Heart right ventricle (tissue), 16 donors: ENCODE measurements at regions of chr10 and their contacts with region 1.

Region 1: GRCh38 chr10:95474228-95475002 is 86.8 kb downstream of the SORBS1 start:
- DNase-seq: peak in 1 of 2 donors; percentile 45
- ATAC-seq: peak; percentile 39 to 82 (median 68)
- H3K4me3 ChIP-seq: no peak overlapping the region
- H3K27ac ChIP-seq: peak overlapping the region; percentile 50 to 94 (median 90)
- H3K4me1 ChIP-seq: peaks cover 34 to 98% (median 78%) of the 10 kb centered on the region in 9 donors
- H3K27me3 ChIP-seq: no peaks in the 10 kb centered on the region
- CTCF ChIP-seq: peak in 2 of 9 donors; percentile 26 to 30

Region 2: GRCh38 chr10:95097805-95098204 is 376.6 kb before region 1 on chr10:
- intact Hi-C with region 1: no loop called
- DNase-seq: no peak
- ATAC-seq: no peak
- H3K4me3 ChIP-seq: no peak overlapping the region
- H3K27ac ChIP-seq: no peak overlapping the region
- H3K4me1 ChIP-seq: no peaks in the 10 kb centered on the region
- H3K27me3 ChIP-seq: no peaks in the 10 kb centered on the region
- CTCF ChIP-seq: no peak

Region 3: DNA sequence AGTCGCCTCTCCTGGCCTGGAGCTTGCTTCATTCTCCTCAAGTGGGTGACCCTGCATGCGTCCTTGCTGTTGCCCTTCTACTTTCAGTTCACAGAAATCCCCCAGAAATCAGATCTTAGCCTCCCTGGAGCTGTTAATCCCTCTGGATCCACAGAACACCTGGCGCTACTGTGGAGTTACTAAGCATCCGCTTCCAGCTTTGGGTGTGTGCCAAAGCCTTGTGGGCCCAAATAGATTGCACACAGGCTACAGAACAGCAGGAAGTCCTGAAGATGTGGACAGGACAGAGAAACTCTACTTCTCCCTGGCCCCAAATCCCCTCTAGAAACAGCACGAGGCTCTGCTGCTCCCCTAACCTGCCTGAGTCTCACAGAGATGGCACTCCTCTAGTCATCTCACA is 147.0 kb before region 1 on chr10:
- intact Hi-C with region 1: no loop called
- DNase-seq: peak; percentile 43 to 79
- ATAC-seq: peak; percentile 50 to 87 (median 76)
- H3K4me3 ChIP-seq: no peak overlapping the region
- H3K27ac ChIP-seq: peak overlapping the region in 9 of 10 donors; percentile 42 to 96 (median 61)
- H3K4me1 ChIP-seq: peaks cover 3 to 90% (median 56%) of the 10 kb centered on the region in 9 donors
- H3K27me3 ChIP-seq: no peaks in the 10 kb centered on the region
- CTCF ChIP-seq: peak in 1 of 9 donors; percentile 13

Region 4: DNA sequence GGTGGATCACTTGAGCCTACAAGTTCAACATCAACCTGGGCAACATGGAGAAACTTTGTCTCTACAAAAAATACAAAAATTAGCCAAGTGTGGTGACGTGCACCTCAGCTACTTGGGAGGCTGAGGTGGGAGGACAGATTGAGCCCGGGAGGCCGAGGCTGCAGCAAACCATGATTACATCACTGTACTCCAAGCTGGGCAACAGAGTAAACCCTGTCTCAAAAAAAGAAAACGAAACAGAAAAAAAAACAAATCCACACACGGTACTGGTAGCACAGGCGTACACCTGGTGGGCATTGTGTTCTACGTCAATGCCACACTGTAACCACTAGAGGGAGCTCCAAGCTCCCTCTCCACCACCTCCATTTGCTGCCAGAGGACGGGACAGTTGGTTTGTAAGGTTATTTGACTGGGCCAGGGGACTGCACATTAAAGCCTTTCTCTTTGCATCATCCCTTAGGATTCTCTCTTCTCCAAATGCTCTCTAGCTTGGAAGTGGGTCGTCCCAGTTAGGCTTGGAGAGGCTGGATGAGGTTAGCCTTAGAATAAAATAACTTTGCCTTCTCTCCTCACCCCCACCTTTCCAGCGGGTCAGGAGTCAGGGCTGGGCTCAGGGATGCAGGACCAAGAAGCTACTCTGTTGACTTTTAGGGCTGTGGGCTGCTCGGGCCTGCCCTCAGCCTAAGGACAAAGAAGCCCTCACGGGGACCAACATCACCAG is 44.0 kb before region 1 on chr10:
- intact Hi-C with region 1: loop called in 5 of 10 experiments (anchors 5 kb)
- DNase-seq: peak in 1 of 2 donors; percentile 59
- ATAC-seq: peak; percentile 71 to 80 (median 77)
- H3K4me3 ChIP-seq: no peak overlapping the region
- H3K27ac ChIP-seq: peak overlapping the region in 8 of 10 donors; percentile 50 to 95 (median 80)
- H3K4me1 ChIP-seq: peaks cover 46 to 100% (median 92%) of the 10 kb centered on the region in 9 donors
- H3K27me3 ChIP-seq: no peaks in the 10 kb centered on the region
- CTCF ChIP-seq: peak; percentile 94 to 98 (median 97)

Region 5: DNA sequence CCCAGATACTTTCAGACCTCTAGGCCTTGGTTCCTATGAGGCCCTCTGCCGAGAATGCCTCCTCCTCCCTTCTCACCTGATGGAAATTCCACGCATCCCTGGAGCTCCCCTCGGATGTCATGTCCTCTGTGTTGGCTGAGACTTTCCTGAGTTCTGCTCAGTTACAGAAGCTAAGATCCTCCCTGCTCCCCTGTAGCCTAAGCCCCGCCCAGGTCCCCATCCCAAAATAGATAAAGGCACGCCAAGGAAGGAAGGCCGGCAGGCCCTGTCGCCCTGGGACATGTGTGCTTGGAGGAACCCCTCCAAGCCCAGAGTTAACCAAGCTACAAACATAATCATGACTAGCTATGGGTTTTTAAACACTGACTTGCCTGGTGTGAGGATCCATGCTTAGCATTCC is 36.7 kb before region 1 on chr10:
- intact Hi-C with region 1: loop called in 5 of 10 experiments (anchors 5 kb)
- DNase-seq: peak; percentile 63 to 66
- ATAC-seq: peak; percentile 14 to 69 (median 51)
- H3K4me3 ChIP-seq: no peak overlapping the region
- H3K27ac ChIP-seq: peak overlapping the region in 8 of 10 donors; percentile 18 to 95 (median 68)
- H3K4me1 ChIP-seq: peaks cover 32 to 100% (median 78%) of the 10 kb centered on the region in 9 donors
- H3K27me3 ChIP-seq: no peaks in the 10 kb centered on the region
- CTCF ChIP-seq: no peak

Region 6: DNA sequence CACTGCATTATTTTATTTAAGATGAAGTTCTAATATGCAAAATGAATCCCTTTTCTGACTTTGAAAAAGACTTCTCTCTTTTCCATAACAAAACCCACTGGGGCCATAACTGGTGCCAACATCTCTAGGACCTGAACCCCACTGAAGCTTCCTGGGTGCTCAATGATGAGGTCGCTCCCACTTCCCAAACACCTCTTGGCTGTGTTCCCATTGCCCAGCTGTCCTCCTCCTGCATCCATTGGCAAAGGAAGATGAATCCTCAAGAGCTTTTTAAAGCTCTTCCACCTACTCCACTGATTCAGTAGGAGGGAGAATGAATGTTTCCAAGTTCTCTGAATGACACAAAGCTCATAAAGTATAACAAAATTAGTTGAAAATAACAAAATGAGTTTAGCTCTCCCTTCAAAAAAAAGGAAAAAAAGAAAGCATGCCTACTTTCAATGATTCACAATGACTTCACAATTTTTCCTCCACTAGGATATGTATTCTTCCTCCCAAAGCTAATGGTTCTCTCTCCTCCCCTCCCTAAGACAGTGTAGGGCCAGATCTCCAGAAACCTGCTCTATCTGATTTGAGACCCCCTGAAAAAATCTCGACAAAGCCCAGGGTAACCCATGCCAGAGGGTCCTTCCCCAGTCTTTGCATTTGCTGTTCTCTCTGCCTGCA is 22.0 kb after region 1 on chr10:
- intact Hi-C with region 1: no loop called
- DNase-seq: no peak
- ATAC-seq: no peak
- H3K4me3 ChIP-seq: no peak overlapping the region
- H3K27ac ChIP-seq: peak overlapping the region in 5 of 10 donors; percentile 9 to 58 (median 40)
- H3K4me1 ChIP-seq: peaks cover 14 to 88% (median 63%) of the 10 kb centered on the region in 9 donors
- H3K27me3 ChIP-seq: no peaks in the 10 kb centered on the region
- CTCF ChIP-seq: no peak

Region 7: DNA sequence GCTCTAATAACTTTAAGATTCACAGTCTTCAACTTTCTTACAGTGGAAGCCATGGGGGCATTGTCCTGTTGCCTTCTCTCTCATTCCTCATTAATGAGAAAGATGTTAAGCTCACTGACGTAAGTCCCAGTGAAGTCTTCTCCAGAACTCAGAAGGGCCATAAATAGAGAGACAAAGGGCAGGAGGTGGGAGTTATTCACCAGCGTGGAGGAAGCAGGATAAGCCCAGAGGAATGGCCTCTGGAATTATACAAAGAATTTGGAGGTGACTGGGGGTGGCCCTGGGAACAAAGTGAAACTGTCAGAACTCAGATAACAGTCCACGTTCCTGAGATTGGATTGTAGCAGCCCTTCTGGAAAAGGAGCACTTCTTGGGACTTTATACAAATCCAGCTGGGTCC is 34.3 kb after region 1 on chr10:
- intact Hi-C with region 1: loop called in 3 of 10 experiments (anchors 5 kb)
- DNase-seq: peak in 1 of 2 donors; percentile 51
- ATAC-seq: peak; percentile 65 to 86 (median 81)
- H3K4me3 ChIP-seq: peak overlapping the region in 6 of 10 donors; percentile 0 to 28 (median 14)
- H3K27ac ChIP-seq: peak overlapping the region; percentile 62 to 90 (median 82)
- H3K4me1 ChIP-seq: peaks cover 26 to 97% (median 82%) of the 10 kb centered on the region in 9 donors
- H3K27me3 ChIP-seq: no peaks in the 10 kb centered on the region
- CTCF ChIP-seq: no peak

Region 8: DNA sequence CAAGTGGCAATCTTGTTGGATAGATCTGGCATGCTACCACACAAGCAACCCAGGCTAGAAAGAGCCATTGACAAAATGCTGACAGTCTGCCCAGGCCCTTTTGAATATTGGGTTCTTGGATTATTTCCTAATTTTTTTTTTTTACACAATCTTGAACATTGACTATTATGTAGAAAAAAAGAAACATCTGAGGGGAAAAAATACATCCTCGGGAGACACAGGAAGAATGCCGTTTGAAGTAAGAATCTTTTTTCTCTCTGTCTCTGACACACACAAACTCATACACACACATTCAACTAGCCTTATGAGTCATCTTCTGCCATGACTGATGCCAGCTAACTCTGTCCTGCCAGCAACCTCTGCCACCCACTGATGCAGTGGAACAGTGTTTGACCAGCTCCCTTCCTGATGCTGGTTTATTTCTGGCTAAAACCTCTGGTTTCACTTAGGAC is 39.6 kb after region 1 on chr10:
- intact Hi-C with region 1: loop called in 3 of 10 experiments (anchors 5 kb)
- DNase-seq: peak; percentile 25 to 51
- ATAC-seq: peak; percentile 44 to 78 (median 70)
- H3K4me3 ChIP-seq: no peak overlapping the region
- H3K27ac ChIP-seq: peak overlapping the region; percentile 8 to 85 (median 72)
- H3K4me1 ChIP-seq: peaks cover 19 to 99% (median 84%) of the 10 kb centered on the region in 9 donors
- H3K27me3 ChIP-seq: no peaks in the 10 kb centered on the region
- CTCF ChIP-seq: no peak

Region 9: GRCh38 chr10:95601116-95601719 is 126.8 kb after region 1 on chr10:
- intact Hi-C with region 1: no loop called
- DNase-seq: peak; percentile 66 to 85
- ATAC-seq: peak; percentile 80 to 93 (median 88)
- H3K4me3 ChIP-seq: no peak overlapping the region
- H3K27ac ChIP-seq: peak overlapping the region in 2 of 10 donors; percentile 15 to 22
- H3K4me1 ChIP-seq: peaks cover 0 to 27% (median 18%) of the 10 kb centered on the region in 9 donors
- H3K27me3 ChIP-seq: no peaks in the 10 kb centered on the region
- CTCF ChIP-seq: peak; percentile 87 to 99 (median 95)